ENCODE measurements at regions of chr2 and their contacts with region 1.

Region 1: DNA sequence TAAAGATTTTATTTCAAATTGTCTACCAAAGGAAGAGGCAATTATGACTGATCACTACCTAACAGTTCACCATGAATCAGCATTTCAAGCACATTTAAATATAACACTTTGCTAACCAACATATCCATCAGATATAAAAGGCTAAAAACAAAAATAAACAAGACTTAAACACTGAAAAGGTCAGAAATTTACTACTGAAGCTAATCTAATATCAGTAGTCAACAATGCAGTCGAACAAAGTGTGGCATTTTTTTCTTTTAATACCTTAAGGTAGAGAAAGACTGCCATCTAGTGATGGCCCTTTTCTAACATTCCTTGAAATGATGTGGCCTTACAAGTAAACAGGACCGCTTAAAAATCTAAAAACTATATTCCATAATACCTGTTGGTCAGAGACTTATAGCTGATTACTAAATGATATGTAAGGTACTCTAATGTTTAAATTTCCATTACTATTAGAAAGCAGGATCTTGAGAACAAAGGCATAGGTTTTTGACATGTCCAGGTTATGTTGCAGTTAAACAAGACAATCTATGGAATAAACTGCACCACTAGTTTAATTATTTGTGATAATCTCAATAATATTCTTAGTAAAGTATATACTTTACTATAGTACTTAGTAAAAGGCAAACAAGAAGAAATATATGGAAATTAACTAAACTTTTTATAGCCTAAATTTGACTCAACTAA is 80.0 kb downstream of the EXOC6B start:
- DNase-seq: peak in 1 of 2 experiments; percentile 62
- H3K4me3 ChIP-seq: no peak overlapping the region
- H3K27ac ChIP-seq: no peak overlapping the region
- H3K4me1 ChIP-seq: peaks cover 6% of the 10 kb centered on the region; the same call in 1 of the 2 replicates
- H3K27me3 ChIP-seq: no peaks in the 10 kb centered on the region
- CTCF ChIP-seq: peak; percentile 90

Region 2: GRCh38 chr2:71530641-71531332 is 1215.0 kb before region 1 on chr2:
- CTCF ChIA-PET with region 1: no interaction called
- POLR2A ChIA-PET with region 1: no interaction called
- intact Hi-C with region 1: loop called (anchors 5 kb)
- DNase-seq: peak in 1 of 2 experiments; percentile 22
- H3K4me3 ChIP-seq: no peak overlapping the region
- H3K27ac ChIP-seq: peak overlapping the region; percentile 29; the same call in 1 of the 2 replicates
- H3K4me1 ChIP-seq: peaks cover 10% of the 10 kb centered on the region; the same call in 1 of the 2 replicates
- H3K27me3 ChIP-seq: no peaks in the 10 kb centered on the region
- CTCF ChIP-seq: peak; percentile 84

Region 3: GRCh38 chr2:71545572-71546274 is 1200.1 kb before region 1 on chr2:
- CTCF ChIA-PET with region 1: no interaction called
- POLR2A ChIA-PET with region 1: no interaction called
- intact Hi-C with region 1: loop called (anchors 1 kb)
- DNase-seq: peak; percentile 31 to 48
- H3K4me3 ChIP-seq: no peak overlapping the region
- H3K27ac ChIP-seq: no peak overlapping the region
- H3K4me1 ChIP-seq: no peaks in the 10 kb centered on the region
- H3K27me3 ChIP-seq: no peaks in the 10 kb centered on the region
- CTCF ChIP-seq: peak; percentile 87

Region 4: DNA sequence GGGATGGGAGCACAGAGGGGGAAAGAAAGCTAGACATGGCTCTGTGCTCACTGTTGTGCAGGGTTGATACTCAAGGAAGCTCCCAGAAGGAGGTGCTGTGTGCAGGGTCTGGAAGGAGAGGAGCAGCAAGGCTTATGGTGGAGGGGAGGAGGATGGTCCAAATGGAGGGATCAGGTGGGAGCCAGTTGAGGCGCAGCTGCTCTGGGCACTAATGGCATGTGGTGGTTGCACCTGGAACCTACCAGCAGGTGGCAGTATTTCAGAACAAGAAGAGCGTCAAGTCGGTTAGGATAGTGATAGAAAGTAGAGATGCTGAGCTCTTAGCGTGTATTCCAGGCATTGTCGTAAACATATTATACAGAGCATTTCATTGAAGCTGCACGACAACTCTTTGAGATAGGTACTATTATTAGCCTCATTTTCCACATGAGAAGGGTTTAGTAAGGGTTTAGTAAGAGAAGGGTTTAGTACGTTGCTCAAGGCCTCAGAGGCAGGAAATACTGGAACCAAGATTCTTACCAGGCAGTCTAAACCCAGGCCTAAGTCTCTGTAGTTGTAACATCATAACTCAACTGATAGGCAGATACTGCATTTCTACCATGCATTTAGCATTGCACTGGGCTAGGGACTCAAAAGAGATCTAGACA is 821.8 kb before region 1 on chr2:
- CTCF ChIA-PET with region 1: no interaction called
- POLR2A ChIA-PET with region 1: no interaction called
- intact Hi-C with region 1: loop called (anchors 5 kb)
- DNase-seq: peak; percentile 42 to 48
- H3K4me3 ChIP-seq: no peak overlapping the region
- H3K27ac ChIP-seq: no peak overlapping the region
- H3K4me1 ChIP-seq: peaks cover 10% of the 10 kb centered on the region
- H3K27me3 ChIP-seq: no peaks in the 10 kb centered on the region
- CTCF ChIP-seq: peak; percentile 94